ENCODE measurements at regions of chr17 and their contacts with region 1.

Region 1: DNA sequence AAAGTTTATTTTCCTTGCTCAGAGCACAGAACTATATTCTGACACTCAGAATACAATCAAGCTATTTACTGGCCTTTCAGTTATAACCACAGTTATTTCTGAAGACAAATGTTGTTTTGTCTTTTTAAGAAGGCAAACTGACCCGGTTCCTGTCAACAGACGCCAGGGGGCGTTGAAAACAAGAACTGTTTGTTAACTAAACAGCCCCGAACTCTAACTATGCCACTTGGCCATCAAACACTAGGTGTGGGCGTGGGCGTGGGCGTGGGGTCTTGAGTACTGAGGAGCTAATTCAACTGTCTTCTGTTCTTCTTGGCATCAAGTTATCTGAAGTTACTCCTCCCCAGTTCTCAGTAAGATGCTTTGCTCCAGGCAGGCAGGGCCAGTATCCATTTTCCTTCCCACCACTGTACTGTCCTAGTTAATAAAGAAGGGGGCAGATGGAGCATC is 63.2 kb upstream of the MTMR4 start:
- DNase-seq: peak; percentile 53 to 70
- ATAC-seq: peak; percentile 68 to 86
- H3K4me3 ChIP-seq: no peak overlapping the region
- H3K27ac ChIP-seq: no peak overlapping the region
- H3K4me1 ChIP-seq: peaks cover 14% of the 10 kb centered on the region; the same call in 2 of the 3 replicates
- CTCF ChIP-seq: peak; percentile 69
- EP300 ChIP-seq: no peak
- POLR2A ChIP-seq: no peak
- RAD21 ChIP-seq: peak; percentile 47 to 48; a peak in 4 of 5 replicates

Region 2: DNA sequence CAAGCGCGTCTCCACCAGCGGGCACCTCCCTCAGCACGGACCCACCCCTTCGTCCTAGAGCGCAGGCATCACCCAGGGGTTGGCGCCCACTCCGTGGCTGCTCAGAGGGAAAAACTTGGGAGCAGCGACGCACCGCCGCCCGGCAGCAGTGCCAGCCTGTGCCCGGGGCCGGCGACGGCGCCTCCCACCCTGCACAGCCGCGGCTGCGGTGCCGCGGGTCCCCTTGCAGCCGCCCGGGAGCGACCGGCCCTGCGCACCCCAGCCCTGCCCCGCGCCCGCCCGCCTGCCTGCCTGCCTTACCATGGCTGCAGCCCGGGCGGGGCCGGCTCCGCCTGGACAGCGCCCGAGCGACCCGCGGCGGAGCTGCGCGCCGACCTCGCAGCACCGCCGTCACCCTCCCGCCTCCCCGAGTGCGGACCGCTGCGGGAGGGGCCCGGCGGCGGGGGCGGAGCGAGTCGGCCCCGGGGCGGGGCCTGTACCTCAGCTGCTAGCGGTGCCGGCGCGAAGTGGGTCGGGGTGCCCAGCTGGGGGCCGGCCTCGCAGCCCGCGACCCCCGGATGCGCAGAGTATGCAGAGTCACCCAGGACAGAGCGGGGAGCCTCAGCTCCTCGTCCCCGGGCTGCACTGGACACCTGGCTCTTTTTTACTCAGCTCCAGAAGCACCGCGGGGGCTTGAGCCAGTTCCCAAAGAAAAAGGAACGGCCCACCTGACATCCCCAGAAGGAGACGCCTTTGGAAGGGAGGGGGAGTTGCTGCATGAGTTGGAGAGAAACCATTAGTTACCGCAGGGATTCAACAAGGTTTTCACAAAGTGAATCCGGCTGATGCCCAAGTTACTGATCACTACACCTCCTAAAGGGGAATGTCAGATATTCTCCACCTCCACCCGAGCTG is 45.8 kb before region 1 on chr17:
- CTCF ChIA-PET with region 1: interaction called, 32 read pairs
- POLR2A ChIA-PET with region 1: no interaction called
- DNase-seq: no peak
- ATAC-seq: peak; percentile 51 to 66
- H3K4me3 ChIP-seq: peak overlapping the region; percentile 71
- H3K27ac ChIP-seq: peak overlapping the region; percentile 61 to 81
- H3K4me1 ChIP-seq: peaks cover 24% of the 10 kb centered on the region
- CTCF ChIP-seq: no peak
- EP300 ChIP-seq: no peak
- POLR2A ChIP-seq: 0 out of 2 replicates have a peak, but pooled peaks have one; percentile 7
- RAD21 ChIP-seq: no peak

Region 3: GRCh38 chr17:58541249-58541648 is 36.4 kb before region 1 on chr17:
- CTCF ChIA-PET with region 1: interaction called, 32 read pairs
- POLR2A ChIA-PET with region 1: no interaction called
- DNase-seq: peak in 1 of 2 experiments; percentile 43
- ATAC-seq: peak; percentile 57 to 80; a peak in 3 of 6 replicates
- H3K4me3 ChIP-seq: no peak overlapping the region
- H3K27ac ChIP-seq: no peak overlapping the region
- H3K4me1 ChIP-seq: peaks cover 1% of the 10 kb centered on the region; the same call in 2 of the 3 replicates
- CTCF ChIP-seq: peak; percentile 12; the same call in 1 of the 3 replicates
- EP300 ChIP-seq: no peak
- POLR2A ChIP-seq: no peak
- RAD21 ChIP-seq: peak in 1 of 2 experiments; percentile 40; a peak in 2 of 5 replicates

Region 4: GRCh38 chr17:58556833-58557250 is 20.8 kb before region 1 on chr17:
- CTCF ChIA-PET with region 1: interaction called, 24 read pairs
- POLR2A ChIA-PET with region 1: no interaction called
- DNase-seq: no peak
- ATAC-seq: no peak
- H3K4me3 ChIP-seq: no peak overlapping the region
- H3K27ac ChIP-seq: no peak overlapping the region
- H3K4me1 ChIP-seq: no peaks in the 10 kb centered on the region
- CTCF ChIP-seq: no peak
- EP300 ChIP-seq: no peak
- POLR2A ChIP-seq: no peak
- RAD21 ChIP-seq: no peak

Region 5: GRCh38 chr17:58565780-58566189 is 11.9 kb before region 1 on chr17:
- CTCF ChIA-PET with region 1: interaction called, 26 read pairs
- POLR2A ChIA-PET with region 1: no interaction called
- DNase-seq: no peak
- ATAC-seq: no peak
- H3K4me3 ChIP-seq: no peak overlapping the region
- H3K27ac ChIP-seq: no peak overlapping the region
- H3K4me1 ChIP-seq: no peaks in the 10 kb centered on the region
- CTCF ChIP-seq: no peak
- EP300 ChIP-seq: no peak
- POLR2A ChIP-seq: no peak
- RAD21 ChIP-seq: no peak

Region 6: GRCh38 chr17:58587702-58588254 is 10.1 kb after region 1 on chr17:
- CTCF ChIA-PET with region 1: interaction called, 59 read pairs
- POLR2A ChIA-PET with region 1: no interaction called
- DNase-seq: peak; percentile 69 to 81
- ATAC-seq: peak; percentile 91 to 96
- H3K4me3 ChIP-seq: no peak overlapping the region
- H3K27ac ChIP-seq: no peak overlapping the region
- H3K4me1 ChIP-seq: no peaks in the 10 kb centered on the region
- CTCF ChIP-seq: peak; percentile 93
- EP300 ChIP-seq: no peak
- POLR2A ChIP-seq: no peak
- RAD21 ChIP-seq: peak; percentile 89

Region 7: DNA sequence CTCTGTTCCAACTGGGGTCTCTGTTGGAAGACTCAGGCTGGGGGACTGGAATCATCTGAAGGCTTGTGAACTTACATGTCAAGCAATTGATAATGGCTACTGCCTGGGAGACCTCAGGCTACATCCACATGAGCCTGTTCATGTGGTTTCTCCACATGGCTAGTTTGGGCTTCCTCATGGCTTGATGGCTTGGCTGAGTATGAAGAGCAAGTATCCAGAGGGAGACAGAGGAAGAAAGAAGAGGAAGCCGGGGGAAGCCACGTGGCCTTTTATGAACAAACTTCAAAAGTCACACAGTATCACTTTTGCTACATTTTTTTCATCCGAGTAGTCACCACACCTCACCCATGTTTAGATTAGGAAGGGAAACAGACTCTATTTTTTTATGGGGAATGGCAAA is 370.2 kb after region 1 on chr17:
- CTCF ChIA-PET with region 1: no interaction called
- POLR2A ChIA-PET with region 1: interaction called, 10 read pairs
- DNase-seq: no peak
- ATAC-seq: no peak
- H3K4me3 ChIP-seq: no peak overlapping the region
- H3K27ac ChIP-seq: no peak overlapping the region
- H3K4me1 ChIP-seq: no peaks in the 10 kb centered on the region
- CTCF ChIP-seq: no peak
- EP300 ChIP-seq: no peak
- POLR2A ChIP-seq: no peak
- RAD21 ChIP-seq: no peak